ENCODE measurements at regions of chr15 and their contacts with region 1.

Region 1: GRCh38 chr15:43800286-43801141 is at the start of gene HYPK:
- DNase-seq: peak; percentile 83
- ATAC-seq: peak; percentile 78
- H3K4me3 ChIP-seq: peak within 1 kb of the TSS; percentile 80
- H3K27ac ChIP-seq: peak within 1 kb of the TSS; percentile 78
- H3K4me1 ChIP-seq: peaks cover 8% of the 10 kb centered on the region
- H3K27me3 ChIP-seq: no peaks in the 10 kb centered on the region
- CTCF ChIP-seq: no peak
- POLR2A ChIP-seq: peak; percentile 72
- RAD21 ChIP-seq: no peak
- total RNA-seq, gene HYPK: 1.4 and 5.3 TPM in 2 replicates

Region 2: GRCh38 chr15:43821505-43821904 is 21.0 kb after region 1 on chr15:
- CTCF ChIA-PET with region 1: no interaction called
- POLR2A ChIA-PET with region 1: interaction called, 18 read pairs
- dilution Hi-C with region 1: no loop called
- in situ Hi-C with region 1: no loop called
- intact Hi-C with region 1: no loop called
- DNase-seq: peak; percentile 80
- ATAC-seq: peak; percentile 55
- H3K4me3 ChIP-seq: no peak overlapping the region
- H3K27ac ChIP-seq: peak overlapping the region; percentile 71; the same call in 1 of the 2 replicates
- H3K4me1 ChIP-seq: peaks cover 4% of the 10 kb centered on the region
- H3K27me3 ChIP-seq: no peaks in the 10 kb centered on the region
- CTCF ChIP-seq: no peak
- POLR2A ChIP-seq: 0 out of 2 replicates have a peak, but pooled peaks have one; percentile 17
- RAD21 ChIP-seq: no peak